Activated naive CD4-positive, alpha-beta T cell treated with anti-CD3 and anti-CD28 coated beads, Interleukin-2, amount 10 ng/mL, durations not matched to agents 7 days and 5 days (primary cell): ENCODE measurements at regions of chr5 and their contacts with region 1.

Region 1: GRCh38 chr5:41843456-41844370 is 26.5 kb downstream of the OXCT1 start:
- DNase-seq: peak; percentile 35
- H3K4me3 Mint-ChIP-seq: no peak overlapping the region
- H3K27ac Mint-ChIP-seq: no peak overlapping the region
- H3K4me1 Mint-ChIP-seq: no peaks in the 10 kb centered on the region
- H3K27me3 Mint-ChIP-seq: no peaks in the 10 kb centered on the region

Region 2: GRCh38 chr5:41695920-41696582 is 147.7 kb before region 1 on chr5:
- CTCF ChIA-PET with region 1: interaction called, 12 read pairs
- DNase-seq: no peak
- H3K4me3 Mint-ChIP-seq: no peak overlapping the region
- H3K27ac Mint-ChIP-seq: no peak overlapping the region
- H3K4me1 Mint-ChIP-seq: no peaks in the 10 kb centered on the region
- H3K27me3 Mint-ChIP-seq: no peaks in the 10 kb centered on the region

Region 3: GRCh38 chr5:41863871-41864486 is 20.3 kb after region 1 on chr5:
- CTCF ChIA-PET with region 1: no interaction called
- DNase-seq: no peak
- H3K4me3 Mint-ChIP-seq: no peak overlapping the region
- H3K27ac Mint-ChIP-seq: no peak overlapping the region
- H3K4me1 Mint-ChIP-seq: peaks cover 55% of the 10 kb centered on the region
- H3K27me3 Mint-ChIP-seq: no peaks in the 10 kb centered on the region

Region 4: DNA sequence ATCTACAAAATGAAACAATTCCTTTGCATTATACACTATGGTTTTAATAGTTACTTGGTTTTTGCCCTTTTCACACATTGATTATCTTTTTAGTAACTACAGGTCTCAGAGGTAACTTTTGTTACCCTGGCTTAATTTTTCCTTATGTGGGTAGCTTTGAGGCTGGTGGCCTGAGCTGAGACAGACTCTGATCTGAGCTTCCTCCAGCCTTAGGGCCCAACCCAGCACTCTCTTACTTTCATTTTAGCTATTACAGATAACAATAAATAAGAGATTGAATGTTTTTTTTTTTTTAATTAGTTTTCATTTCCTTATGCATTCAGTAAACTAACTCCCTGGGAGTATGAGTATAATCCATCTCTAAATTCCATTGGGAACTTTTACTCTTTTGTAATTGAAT is 41.6 kb after region 1 on chr5:
- CTCF ChIA-PET with region 1: no interaction called
- DNase-seq: no peak
- H3K4me3 Mint-ChIP-seq: no peak overlapping the region
- H3K27ac Mint-ChIP-seq: no peak overlapping the region
- H3K4me1 Mint-ChIP-seq: no peaks in the 10 kb centered on the region
- H3K27me3 Mint-ChIP-seq: peaks cover 13% of the 10 kb centered on the region